GM12878 (cell line): ENCODE measurements at regions of chr2 and their contacts with region 1.

Region 1: GRCh38 chr2:44218771-44219170 is 50.1 kb downstream of the PPM1B start:
- DNase-seq: no peak
- ATAC-seq: no peak
- H3K4me3 ChIP-seq: no peak overlapping the region
- H3K27ac ChIP-seq: no peak overlapping the region
- H3K4me1 ChIP-seq: no peaks in the 10 kb centered on the region
- H3K27me3 ChIP-seq: no peaks in the 10 kb centered on the region
- CTCF ChIP-seq: no peak
- EP300 ChIP-seq: no peak
- POLR2A ChIP-seq: no peak
- RAD21 ChIP-seq: no peak

Region 2: GRCh38 chr2:44184106-44184505 is 34.7 kb before region 1 on chr2:
- CTCF ChIA-PET with region 1: interaction called, 5 read pairs
- POLR2A ChIA-PET with region 1: no interaction called
- RAD21 ChIA-PET with region 1: no interaction called
- SMC1A ChIA-PET with region 1: interaction called, 10 read pairs
- in situ Hi-C with region 1: no loop called
- intact Hi-C with region 1: no loop called
- DNase-seq: no peak
- ATAC-seq: peak; percentile 71
- H3K4me3 ChIP-seq: no peak overlapping the region
- H3K27ac ChIP-seq: no peak overlapping the region
- H3K4me1 ChIP-seq: peaks cover 8% of the 10 kb centered on the region; the same call in 1 of the 2 replicates
- H3K27me3 ChIP-seq: no peaks in the 10 kb centered on the region
- CTCF ChIP-seq: no peak
- EP300 ChIP-seq: no peak
- POLR2A ChIP-seq: no peak
- RAD21 ChIP-seq: no peak